ENCODE measurements at regions of chrX and their contacts with region 1.

Region 1: DNA sequence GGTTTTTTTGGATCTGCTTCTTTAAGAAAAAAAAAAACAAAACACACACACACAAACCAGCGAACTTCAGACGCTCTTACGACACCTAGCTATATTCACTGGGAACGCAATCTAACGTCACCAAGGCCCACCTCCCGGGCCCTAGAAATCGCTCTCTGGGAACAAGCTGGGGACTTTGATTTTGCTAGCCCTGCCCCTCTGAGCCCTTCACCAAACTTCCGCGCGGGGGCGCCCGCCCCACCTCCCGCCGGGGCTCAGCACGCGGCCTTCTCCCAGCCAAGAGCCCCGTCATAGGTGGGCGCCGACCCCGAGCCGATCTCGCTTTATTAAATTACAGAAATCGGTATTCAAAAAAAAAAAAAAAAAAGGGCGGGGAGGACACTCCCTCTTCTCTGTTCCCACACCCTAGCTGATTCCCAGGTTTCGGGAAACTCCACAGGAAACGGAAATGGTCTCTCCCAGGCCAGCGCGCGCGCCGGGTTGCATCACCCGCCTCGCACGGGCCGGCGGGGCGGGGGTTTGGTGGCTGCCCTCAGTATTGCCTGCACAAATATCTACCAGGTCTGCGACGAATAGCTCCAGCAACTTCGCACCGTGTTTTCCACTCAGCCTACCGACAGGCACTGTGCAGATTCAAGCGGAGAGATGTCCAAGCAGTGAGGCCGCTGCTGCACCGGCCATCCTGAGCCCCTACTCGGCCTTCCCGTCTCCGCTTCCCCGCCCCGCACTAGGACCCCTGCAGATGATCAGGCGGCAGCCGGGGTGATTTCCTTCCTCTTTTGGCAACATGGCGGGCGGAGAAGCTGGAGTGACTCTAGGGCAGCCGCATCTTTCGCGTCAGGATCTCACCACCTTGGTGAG is at the start of gene EIF2S3:
- DNase-seq: peak; percentile 84
- H3K4me3 ChIP-seq: no peak within 1 kb of the TSS; the same call in 1 of the 2 replicates
- CTCF ChIP-seq: peak; percentile 72

Region 2: GRCh38 chrX:23907498-23908218 is 146.8 kb before region 1 on chrX and contains the starts of genes APOO and CXorf58:
- CTCF ChIA-PET with region 1: interaction called, 28 read pairs
- POLR2A ChIA-PET with region 1: no interaction called
- DNase-seq: no peak
- H3K4me3 ChIP-seq: peak within 1 kb of the TSS; percentile 67
- CTCF ChIP-seq: peak; percentile 70

Region 3: GRCh38 chrX:24024819-24025740 is 29.3 kb before region 1 on chrX:
- CTCF ChIA-PET with region 1: interaction called, 17 read pairs
- POLR2A ChIA-PET with region 1: interaction called, 20 read pairs
- DNase-seq: peak; percentile 37
- H3K4me3 ChIP-seq: peak overlapping the region; percentile 73
- CTCF ChIP-seq: peak; percentile 14